ENCODE measurements at regions of chr10 and their contacts with region 1.

Region 1: GRCh38 chr10:88386821-88387773 is 196.0 kb downstream of the RNLS start:
- DNase-seq: peak; percentile 80
- ATAC-seq: peak; percentile 82
- H3K4me3 ChIP-seq: peak overlapping the region; percentile 48
- H3K27ac ChIP-seq: peak overlapping the region; percentile 99
- H3K4me1 ChIP-seq: peaks cover 63% of the 10 kb centered on the region
- H3K27me3 ChIP-seq: no peaks in the 10 kb centered on the region
- CTCF ChIP-seq: no peak
- EP300 ChIP-seq: 0 out of 4 replicates have a peak, but pooled peaks of 1 of the 2 experiments have one; percentile 37
- POLR2A ChIP-seq: no peak; the same call in none of the 2 replicates
- RAD21 ChIP-seq: no peak

Region 2: GRCh38 chr10:87850742-87851205 is 536.3 kb before region 1 on chr10:
- CTCF ChIA-PET with region 1: interaction called, 34 read pairs
- POLR2A ChIA-PET with region 1: no interaction called
- RAD21 ChIA-PET with region 1: interaction called, 10 read pairs
- SMC1A ChIA-PET with region 1: interaction called, 27 read pairs
- in situ Hi-C with region 1: no loop called
- intact Hi-C with region 1: no loop called
- DNase-seq: no peak
- ATAC-seq: peak; percentile 96
- H3K4me3 ChIP-seq: no peak overlapping the region
- H3K27ac ChIP-seq: no peak overlapping the region
- H3K4me1 ChIP-seq: no peaks in the 10 kb centered on the region
- H3K27me3 ChIP-seq: no peaks in the 10 kb centered on the region
- CTCF ChIP-seq: peak; percentile 58 to 74 (median 67); a peak in 5 of 6 replicates
- EP300 ChIP-seq: no peak
- POLR2A ChIP-seq: no peak
- RAD21 ChIP-seq: peak; percentile 74

Region 3: DNA sequence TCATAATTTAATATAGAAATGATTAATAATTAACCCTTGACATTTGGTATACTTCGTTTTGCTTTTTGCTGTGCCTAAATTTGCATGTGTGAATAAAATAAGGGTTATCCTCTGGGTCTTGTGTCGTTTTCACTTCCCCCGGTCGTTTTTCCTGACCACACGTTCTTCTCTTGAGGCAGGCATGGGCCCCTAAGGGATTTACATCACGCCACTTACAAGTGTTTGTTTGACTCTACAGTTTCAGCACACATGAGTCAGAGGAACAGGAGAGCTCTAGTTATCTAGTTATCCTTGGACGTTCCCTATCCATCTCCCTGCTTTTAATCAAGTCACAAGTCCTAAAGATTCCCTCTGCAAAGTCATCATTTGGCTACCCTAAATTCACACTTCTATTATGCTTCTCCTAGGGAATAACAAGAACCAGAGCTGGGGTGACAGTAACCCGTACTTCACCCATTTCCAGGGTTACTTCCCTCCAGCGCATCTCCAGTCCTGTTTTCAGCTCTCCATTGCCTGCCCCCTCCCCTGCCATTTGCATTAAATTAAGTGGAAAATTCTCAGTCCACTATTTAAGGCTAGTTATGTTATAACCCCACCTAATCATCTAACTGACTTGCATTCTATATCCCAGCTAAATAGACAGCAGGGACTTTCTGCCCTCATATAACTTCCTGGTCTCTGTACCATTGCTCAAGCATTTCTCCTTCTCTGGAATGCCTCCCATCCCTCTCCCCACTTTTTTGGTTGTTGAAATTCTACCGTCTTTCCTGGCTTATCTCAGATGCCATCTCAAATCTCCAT is 316.8 kb before region 1 on chr10:
- CTCF ChIA-PET with region 1: interaction called, 12 read pairs
- POLR2A ChIA-PET with region 1: interaction called, 8 read pairs
- RAD21 ChIA-PET with region 1: interaction called, 23 read pairs
- SMC1A ChIA-PET with region 1: interaction called, 24 read pairs
- in situ Hi-C with region 1: no loop called
- intact Hi-C with region 1: loop called (anchors 2 kb)
- DNase-seq: peak; percentile 92
- ATAC-seq: peak; percentile 74
- H3K4me3 ChIP-seq: 0 out of 2 replicates have a peak overlapping the region, but pooled peaks have one; percentile 18
- H3K27ac ChIP-seq: peak overlapping the region; percentile 73
- H3K4me1 ChIP-seq: peaks cover 69% of the 10 kb centered on the region
- H3K27me3 ChIP-seq: no peaks in the 10 kb centered on the region
- CTCF ChIP-seq: no peak
- EP300 ChIP-seq: peak; percentile 97 to 99; a peak in 3 of 4 replicates
- POLR2A ChIP-seq: no peak
- RAD21 ChIP-seq: peak; percentile 33; the same call in 1 of the 2 replicates

Region 4: DNA sequence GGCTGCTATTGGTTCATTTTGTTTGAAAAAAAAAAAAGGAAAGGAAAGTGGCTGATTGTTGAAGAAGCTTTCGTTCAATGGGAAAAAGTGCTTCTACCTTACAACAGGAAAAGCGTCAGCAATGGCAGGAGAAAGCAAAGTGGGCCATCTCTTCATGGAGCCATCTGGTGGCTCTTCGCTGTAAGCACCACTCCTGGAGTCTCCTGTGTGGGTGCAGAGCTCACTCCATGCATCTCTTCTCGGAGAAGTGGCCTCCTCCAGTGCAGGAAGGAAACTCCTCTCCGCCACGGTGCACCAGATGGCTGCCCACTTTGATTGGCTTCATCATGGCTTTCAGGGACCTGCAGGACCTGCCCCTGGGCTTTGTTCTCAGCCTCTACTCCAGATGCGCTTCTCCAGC is 272.7 kb before region 1 on chr10:
- CTCF ChIA-PET with region 1: interaction called, 51 read pairs
- POLR2A ChIA-PET with region 1: interaction called, 9 read pairs
- RAD21 ChIA-PET with region 1: interaction called, 102 read pairs
- SMC1A ChIA-PET with region 1: interaction called, 192 read pairs
- in situ Hi-C with region 1: no loop called
- intact Hi-C with region 1: loop called (anchors 2 kb)
- DNase-seq: no peak
- ATAC-seq: peak; percentile 61
- H3K4me3 ChIP-seq: no peak overlapping the region
- H3K27ac ChIP-seq: peak overlapping the region; percentile 86
- H3K4me1 ChIP-seq: peaks cover 87% of the 10 kb centered on the region
- H3K27me3 ChIP-seq: no peaks in the 10 kb centered on the region
- CTCF ChIP-seq: peak; percentile 69 to 73 (median 72)
- EP300 ChIP-seq: no peak
- POLR2A ChIP-seq: no peak
- RAD21 ChIP-seq: peak; percentile 86

Region 5: GRCh38 chr10:88216976-88217375 is 170.1 kb before region 1 on chr10:
- CTCF ChIA-PET with region 1: interaction called, 24 read pairs
- POLR2A ChIA-PET with region 1: interaction called, 7 read pairs
- RAD21 ChIA-PET with region 1: interaction called, 4 read pairs
- SMC1A ChIA-PET with region 1: interaction called, 5 read pairs
- in situ Hi-C with region 1: no loop called
- intact Hi-C with region 1: no loop called
- DNase-seq: no peak
- ATAC-seq: peak; percentile 84
- H3K4me3 ChIP-seq: no peak overlapping the region
- H3K27ac ChIP-seq: no peak overlapping the region
- H3K4me1 ChIP-seq: peaks cover 3% of the 10 kb centered on the region; the same call in 1 of the 2 replicates
- H3K27me3 ChIP-seq: no peaks in the 10 kb centered on the region
- CTCF ChIP-seq: peak; percentile 15 to 33 (median 32); a peak in 4 of 6 replicates
- EP300 ChIP-seq: no peak
- POLR2A ChIP-seq: no peak
- RAD21 ChIP-seq: peak; percentile 64

Region 6: DNA sequence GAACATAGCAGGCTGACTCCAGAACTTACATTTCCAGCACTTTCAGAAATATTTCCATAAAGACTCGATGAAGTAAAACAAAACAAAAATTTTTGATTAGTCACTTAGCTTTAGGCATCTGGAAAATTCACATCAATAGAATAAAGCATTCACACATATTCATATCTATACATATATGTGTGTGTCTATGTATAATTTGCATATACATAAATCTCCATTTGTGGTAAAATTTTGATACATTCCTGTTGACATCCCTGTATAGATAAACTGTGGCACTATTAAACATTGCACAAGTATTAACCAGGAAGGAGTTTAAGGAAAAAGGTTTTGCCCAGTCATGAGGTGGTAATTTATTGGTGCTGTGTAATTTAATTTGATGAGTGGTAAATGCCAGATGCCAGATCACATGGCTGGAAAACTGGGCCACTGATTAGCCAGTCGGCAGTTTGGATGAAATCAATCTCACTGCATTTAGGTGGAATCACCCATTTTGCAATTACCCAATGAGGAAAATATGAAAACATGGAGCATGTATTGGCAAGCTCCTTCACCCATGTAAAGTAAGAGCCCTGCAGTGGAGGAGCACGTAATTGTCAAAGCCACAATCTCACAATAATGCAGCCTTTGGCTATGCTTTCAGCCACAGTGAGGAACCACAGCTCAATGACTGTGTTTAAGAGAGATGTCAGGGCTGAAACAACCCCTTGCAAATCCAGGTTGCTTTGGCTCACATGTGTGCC is 98.6 kb before region 1 on chr10:
- CTCF ChIA-PET with region 1: interaction called, 40 read pairs
- POLR2A ChIA-PET with region 1: interaction called, 17 read pairs
- RAD21 ChIA-PET with region 1: interaction called, 89 read pairs
- SMC1A ChIA-PET with region 1: interaction called, 83 read pairs
- in situ Hi-C with region 1: no loop called
- intact Hi-C with region 1: loop called (anchors 5 kb)
- DNase-seq: peak; percentile 67
- ATAC-seq: peak; percentile 91
- H3K4me3 ChIP-seq: no peak overlapping the region
- H3K27ac ChIP-seq: peak overlapping the region; percentile 13; the same call in 1 of the 2 replicates
- H3K4me1 ChIP-seq: peaks cover 15% of the 10 kb centered on the region
- H3K27me3 ChIP-seq: no peaks in the 10 kb centered on the region
- CTCF ChIP-seq: no peak
- EP300 ChIP-seq: peak; percentile 57 to 66; a peak in 2 of 4 replicates
- POLR2A ChIP-seq: no peak
- RAD21 ChIP-seq: 0 out of 2 replicates have a peak, but pooled peaks have one; percentile 25

Region 7: DNA sequence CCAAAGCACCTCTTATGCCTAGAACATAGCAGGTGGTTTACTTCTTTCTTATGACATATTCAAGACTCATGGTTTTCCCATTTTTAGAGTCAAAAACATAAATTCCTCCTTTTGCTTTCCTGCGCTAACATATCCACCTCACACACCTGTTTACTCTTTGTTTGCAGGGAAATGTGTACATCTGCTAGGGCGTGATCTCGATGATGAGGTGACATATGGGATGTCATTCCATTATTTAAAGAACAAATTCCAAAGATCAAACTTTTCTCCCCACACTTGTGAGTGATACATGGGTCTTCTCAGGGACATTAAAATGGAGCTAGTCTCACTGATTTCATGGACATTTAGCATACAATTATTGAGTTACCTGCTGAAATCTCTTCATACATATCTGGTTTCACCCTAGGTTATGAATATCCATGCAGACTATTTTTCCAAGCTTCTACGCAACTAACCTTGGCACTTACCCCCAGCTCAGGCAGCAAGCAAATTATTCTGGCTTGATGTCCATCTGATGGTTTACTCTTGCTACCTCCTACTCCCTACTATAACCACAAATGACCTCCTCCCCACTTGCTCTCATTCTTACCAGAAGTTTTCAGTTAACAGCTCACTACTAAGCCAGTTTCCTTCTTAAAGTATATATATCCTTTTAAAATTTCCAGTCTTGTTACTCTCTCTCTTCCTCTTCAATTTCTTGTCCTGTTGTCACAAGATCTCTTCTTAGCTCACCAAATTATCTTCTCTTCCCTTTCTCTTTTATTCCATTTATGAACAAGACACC is 12.5 kb before region 1 on chr10:
- CTCF ChIA-PET with region 1: interaction called, 15 read pairs
- POLR2A ChIA-PET with region 1: interaction called, 3 read pairs
- RAD21 ChIA-PET with region 1: interaction called, 18 read pairs
- SMC1A ChIA-PET with region 1: interaction called, 29 read pairs
- in situ Hi-C with region 1: no loop called
- intact Hi-C with region 1: no loop called
- DNase-seq: no peak
- ATAC-seq: no peak
- H3K4me3 ChIP-seq: no peak overlapping the region
- H3K27ac ChIP-seq: no peak overlapping the region
- H3K4me1 ChIP-seq: no peaks in the 10 kb centered on the region; the same call in 1 of the 2 replicates
- H3K27me3 ChIP-seq: no peaks in the 10 kb centered on the region
- CTCF ChIP-seq: no peak
- EP300 ChIP-seq: no peak
- POLR2A ChIP-seq: no peak
- RAD21 ChIP-seq: no peak

Region 8: GRCh38 chr10:88791924-88792323 is 404.8 kb after region 1 on chr10:
- CTCF ChIA-PET with region 1: no interaction called
- POLR2A ChIA-PET with region 1: no interaction called
- RAD21 ChIA-PET with region 1: no interaction called
- SMC1A ChIA-PET with region 1: no interaction called
- in situ Hi-C with region 1: no loop called
- intact Hi-C with region 1: no loop called
- DNase-seq: peak; percentile 17
- ATAC-seq: peak; percentile 91
- H3K4me3 ChIP-seq: no peak overlapping the region
- H3K27ac ChIP-seq: no peak overlapping the region
- H3K4me1 ChIP-seq: peaks cover 7% of the 10 kb centered on the region; the same call in 1 of the 2 replicates
- H3K27me3 ChIP-seq: no peaks in the 10 kb centered on the region
- CTCF ChIP-seq: peak; percentile 44 to 57 (median 52)
- EP300 ChIP-seq: no peak
- POLR2A ChIP-seq: no peak
- RAD21 ChIP-seq: peak; percentile 56